HEK293 (cell line): ENCODE measurements at regions of chr7 and their contacts with region 1.

Region 1: DNA sequence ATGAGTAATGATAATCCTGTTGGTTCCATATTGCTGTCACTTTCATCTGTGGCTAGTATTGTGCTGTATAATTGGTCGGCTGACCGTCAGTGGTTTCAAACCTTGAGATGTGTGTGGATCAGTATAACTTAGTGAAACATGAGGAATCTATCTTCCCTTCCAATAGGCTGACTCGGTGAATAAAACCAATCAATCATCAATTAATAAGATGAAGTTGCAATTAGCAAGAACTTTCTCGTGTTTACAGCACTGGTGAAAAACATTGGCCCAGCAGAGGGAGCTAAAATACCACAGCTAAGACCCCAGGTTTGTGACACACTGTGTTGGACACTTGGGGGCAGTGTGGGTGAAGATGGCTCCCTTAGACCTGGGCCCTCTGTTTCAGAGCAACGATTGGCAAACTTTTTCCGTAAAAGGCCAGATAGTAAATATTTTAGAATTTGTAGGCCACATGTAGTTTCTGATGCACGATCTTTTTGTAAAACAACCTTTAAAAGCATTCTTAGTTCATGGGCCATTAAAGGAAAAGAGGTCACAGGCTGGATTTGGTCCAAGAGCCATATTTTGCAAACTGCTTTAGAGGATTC is 47.8 kb downstream of the STRA8 start:
- H3K4me3 ChIP-seq: no peak overlapping the region
- H3K27ac ChIP-seq: no peak overlapping the region
- H3K4me1 ChIP-seq: no peaks in the 10 kb centered on the region
- CTCF ChIP-seq: peak; percentile 97

Region 2: GRCh38 chr7:135260930-135261721 is 20.3 kb before region 1 on chr7:
- CTCF ChIA-PET with region 1: interaction called, 22 read pairs
- POLR2A ChIA-PET with region 1: no interaction called
- H3K4me3 ChIP-seq: no peak overlapping the region
- H3K27ac ChIP-seq: no peak overlapping the region
- H3K4me1 ChIP-seq: peaks cover 7% of the 10 kb centered on the region
- CTCF ChIP-seq: no peak

Region 3: DNA sequence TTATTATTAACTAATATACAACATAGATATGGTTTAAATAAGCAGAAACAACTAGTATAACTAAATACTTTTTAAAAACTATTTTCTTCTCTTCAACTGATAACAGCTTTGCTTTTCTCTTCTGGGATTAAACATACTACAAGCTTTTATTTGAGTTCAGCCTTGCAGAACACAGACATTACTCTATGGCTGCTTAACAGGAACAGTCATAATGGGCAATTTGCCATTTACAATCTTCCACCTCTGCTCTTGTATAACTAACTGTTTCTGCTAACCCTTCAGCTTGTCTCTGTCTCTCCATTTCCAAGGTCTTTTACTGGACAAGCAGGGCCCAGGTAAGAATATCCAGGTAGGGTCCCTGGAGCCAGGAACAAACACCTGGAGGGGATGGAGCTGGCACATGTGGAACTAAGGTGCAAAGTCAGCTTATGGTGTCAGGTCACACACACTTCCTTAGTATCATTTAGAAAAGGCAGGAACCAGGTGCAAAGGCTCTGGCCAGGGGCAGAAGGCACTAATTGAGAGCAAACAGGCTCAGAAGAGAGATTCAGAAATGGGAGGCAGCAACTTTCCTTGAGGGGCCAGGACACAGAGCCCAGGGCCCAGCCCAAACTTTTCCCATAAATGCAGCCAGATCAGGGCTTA is 45.3 kb after region 1 on chr7:
- CTCF ChIA-PET with region 1: interaction called, 12 read pairs
- POLR2A ChIA-PET with region 1: no interaction called
- H3K4me3 ChIP-seq: no peak overlapping the region
- H3K27ac ChIP-seq: no peak overlapping the region
- H3K4me1 ChIP-seq: no peaks in the 10 kb centered on the region
- CTCF ChIP-seq: no peak

Region 4: DNA sequence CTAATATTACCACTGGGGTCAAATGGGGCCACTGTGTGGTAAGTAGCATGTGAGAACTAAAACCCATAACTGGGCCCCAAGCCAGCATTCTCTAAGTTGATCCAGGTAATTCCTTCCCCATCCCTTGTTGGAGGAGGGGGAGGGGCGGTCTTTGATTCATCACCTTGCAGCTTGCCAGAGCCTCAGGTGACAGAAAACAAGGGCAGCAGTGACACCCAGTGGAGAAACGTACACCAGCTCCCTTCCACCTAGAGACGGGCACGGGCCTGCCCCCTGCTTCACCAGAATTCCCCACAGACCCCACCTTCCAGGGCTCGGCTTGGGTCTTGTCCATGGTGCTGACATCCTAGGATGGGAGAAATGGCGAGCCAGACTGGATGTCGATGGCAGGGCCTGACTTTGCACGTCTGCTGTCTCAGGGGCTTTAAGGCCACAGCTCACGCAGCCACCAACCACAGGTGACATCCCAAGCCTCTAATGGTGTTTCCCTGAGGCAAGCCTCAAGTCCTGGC is 54.2 kb after region 1 on chr7:
- CTCF ChIA-PET with region 1: interaction called, 110 read pairs
- POLR2A ChIA-PET with region 1: no interaction called
- H3K4me3 ChIP-seq: no peak overlapping the region
- H3K27ac ChIP-seq: no peak overlapping the region
- H3K4me1 ChIP-seq: no peaks in the 10 kb centered on the region
- CTCF ChIP-seq: peak; percentile 84

Region 5: DNA sequence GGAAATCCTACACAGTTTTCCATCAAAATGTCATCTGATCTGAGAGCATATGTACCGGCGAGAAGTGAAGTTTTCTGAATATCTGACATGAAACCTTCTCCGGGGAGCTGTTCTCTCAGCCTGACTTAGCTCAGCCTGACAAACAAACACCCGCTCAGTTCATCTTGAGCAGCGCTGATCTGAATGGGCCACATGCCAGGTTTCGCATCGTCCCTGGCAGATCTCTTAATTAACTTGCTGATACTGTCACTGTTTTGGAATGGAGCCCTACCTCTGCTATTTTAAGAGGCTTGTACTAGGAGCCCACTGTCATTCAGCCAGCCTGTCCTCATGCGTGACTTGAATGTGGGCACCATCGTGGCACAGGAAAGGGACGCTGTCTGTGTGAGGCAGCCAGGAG is 61.4 kb after region 1 on chr7:
- CTCF ChIA-PET with region 1: interaction called, 32 read pairs
- POLR2A ChIA-PET with region 1: no interaction called
- H3K4me3 ChIP-seq: no peak overlapping the region
- H3K27ac ChIP-seq: no peak overlapping the region
- H3K4me1 ChIP-seq: no peaks in the 10 kb centered on the region
- CTCF ChIP-seq: no peak

Region 6: DNA sequence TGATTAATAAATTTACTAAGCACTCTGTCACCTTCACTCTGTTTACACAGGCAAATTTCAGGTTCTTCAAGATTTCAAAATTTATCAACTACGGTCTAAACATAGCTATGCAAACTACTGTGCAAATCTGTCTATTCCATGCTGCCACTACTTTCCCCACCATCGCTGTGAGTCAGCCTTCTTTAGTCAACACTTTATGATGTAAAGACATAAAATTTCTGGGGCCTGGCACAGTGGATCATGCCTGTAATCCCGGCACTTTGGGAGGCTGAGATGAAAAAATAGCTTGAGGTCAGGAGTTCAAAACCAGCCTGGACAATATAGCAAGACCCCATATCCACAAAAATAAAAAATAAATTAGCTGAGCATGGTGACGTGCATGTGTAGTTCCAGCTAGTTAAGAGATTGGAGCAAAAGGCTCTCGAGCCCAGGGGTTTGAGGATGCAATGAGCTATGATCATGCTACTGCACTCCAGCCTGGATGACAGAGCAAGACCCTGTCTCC is 185.8 kb after region 1 on chr7:
- CTCF ChIA-PET with region 1: no interaction called
- POLR2A ChIA-PET with region 1: no interaction called
- H3K4me3 ChIP-seq: no peak overlapping the region
- H3K27ac ChIP-seq: no peak overlapping the region
- H3K4me1 ChIP-seq: no peaks in the 10 kb centered on the region
- CTCF ChIP-seq: no peak